ENCODE measurements at regions of chr11 and their contacts with region 1.

Region 1: GRCh38 chr11:35182317-35182939 is 43.5 kb downstream of the CD44 start:
- DNase-seq: no peak
- H3K4me3 ChIP-seq: no peak overlapping the region
- H3K27ac ChIP-seq: no peak overlapping the region
- H3K4me1 ChIP-seq: peaks cover 0 to 25% of the 10 kb centered on the region in 2 donors
- H3K27me3 ChIP-seq: no peaks in the 10 kb centered on the region
- CTCF ChIP-seq: no peak

Region 2: DNA sequence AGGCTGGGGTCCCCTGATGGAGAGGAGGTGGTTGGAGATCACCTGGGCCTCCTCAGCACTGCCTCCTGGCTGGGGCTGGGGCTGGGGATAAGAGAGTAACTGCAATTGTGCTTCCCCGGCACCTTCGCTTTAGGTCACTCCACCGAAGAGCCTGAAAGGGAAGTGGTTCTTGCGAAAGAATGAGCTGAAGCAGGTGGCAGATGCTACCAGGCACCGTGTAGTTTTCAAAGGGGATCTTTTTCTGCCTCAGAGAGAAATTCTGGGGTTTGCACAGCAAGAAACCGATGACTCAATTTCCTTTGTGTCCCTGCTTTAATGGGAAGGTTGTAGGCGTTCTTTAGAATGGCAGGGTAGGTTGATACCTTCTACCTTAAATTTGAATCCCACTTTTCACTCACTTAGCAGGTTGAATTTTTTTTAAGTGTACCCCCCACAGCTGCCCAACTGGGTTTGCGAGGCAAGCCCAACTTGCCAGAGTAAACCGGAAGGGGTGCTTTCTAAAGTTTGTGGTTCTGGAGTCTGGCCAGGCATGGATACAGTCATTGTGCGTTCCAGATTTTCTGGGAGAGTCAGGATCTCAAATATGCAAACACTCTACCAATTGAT is 38.2 kb before region 1 on chr11:
- intact Hi-C with region 1: loop called (anchors 2 kb)
- DNase-seq: no peak
- H3K4me3 ChIP-seq: peak overlapping the region; percentile 3 to 31
- H3K27ac ChIP-seq: peak overlapping the region; percentile 54 to 98
- H3K4me1 ChIP-seq: peaks cover 19 to 50% of the 10 kb centered on the region in 2 donors
- H3K27me3 ChIP-seq: no peaks in the 10 kb centered on the region
- CTCF ChIP-seq: no peak

Region 3: DNA sequence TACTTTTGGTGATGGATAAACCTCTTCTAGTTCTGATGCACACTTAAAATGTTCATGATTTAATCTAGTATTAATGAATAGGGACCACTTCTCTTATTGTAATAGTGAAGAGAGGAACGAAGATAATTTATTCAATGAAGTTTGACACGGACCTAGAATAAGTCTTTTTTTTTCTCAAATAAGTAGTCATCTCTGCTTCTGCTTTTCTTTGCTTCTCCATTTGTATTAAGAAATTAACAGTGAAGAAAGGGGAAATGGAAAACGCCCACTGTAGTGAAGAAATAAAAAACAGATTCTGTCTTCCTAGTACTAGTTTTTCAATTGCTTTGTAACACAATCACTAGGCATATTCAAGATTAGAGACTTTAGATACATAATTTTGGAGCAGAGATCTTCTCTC is 29.5 kb after region 1 on chr11:
- intact Hi-C with region 1: no loop called
- DNase-seq: no peak
- H3K4me3 ChIP-seq: no peak overlapping the region
- H3K27ac ChIP-seq: peak overlapping the region; percentile 35 to 66
- H3K4me1 ChIP-seq: peaks cover 0 to 7% of the 10 kb centered on the region in 2 donors
- H3K27me3 ChIP-seq: no peaks in the 10 kb centered on the region
- CTCF ChIP-seq: no peak

Region 4: DNA sequence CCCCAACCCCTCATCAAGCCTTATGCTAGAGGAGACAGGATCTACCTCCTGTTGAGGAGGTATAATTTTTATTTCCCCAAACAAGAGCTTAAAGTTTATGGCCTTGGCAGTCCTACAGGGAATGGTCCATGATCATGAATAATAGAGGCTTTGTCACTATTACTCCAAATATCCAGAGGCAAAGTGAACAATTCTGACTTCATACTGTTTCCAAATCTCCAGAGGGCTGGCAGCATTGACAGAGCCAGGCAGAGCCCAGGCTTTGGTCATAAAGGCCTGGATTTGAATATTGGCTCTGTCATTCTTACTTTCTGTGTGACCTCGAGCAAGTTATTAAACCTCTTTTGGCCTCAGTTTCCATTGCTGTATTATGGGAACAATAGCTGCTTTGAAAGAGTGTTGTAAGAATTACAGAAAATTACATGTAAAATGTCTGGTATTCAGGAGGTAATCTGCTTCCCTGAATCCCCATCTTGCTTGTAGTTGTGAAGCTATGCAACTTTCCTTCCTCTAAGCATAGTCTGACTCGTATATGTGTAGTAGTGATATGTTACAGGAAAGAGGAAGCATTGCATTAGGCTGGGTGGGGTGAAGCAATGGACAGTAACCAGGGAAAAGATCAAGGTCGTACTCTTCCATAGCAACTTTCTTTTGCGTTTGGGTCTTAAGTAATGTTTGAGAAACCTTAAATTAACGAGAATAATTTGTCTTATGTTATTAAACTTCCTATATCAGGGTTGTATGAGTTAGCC is 45.3 kb after region 1 on chr11:
- intact Hi-C with region 1: no loop called
- DNase-seq: no peak
- H3K4me3 ChIP-seq: no peak overlapping the region
- H3K27ac ChIP-seq: peak overlapping the region in 1 of 2 donors; percentile 29
- H3K4me1 ChIP-seq: no peaks in the 10 kb centered on the region
- H3K27me3 ChIP-seq: no peaks in the 10 kb centered on the region
- CTCF ChIP-seq: no peak

Measured in ascending aorta (tissue), 2 donors.